Activated CD4-positive, alpha-beta T cell treated with anti-CD3 and anti-CD28 coated beads, Interleukin-2, amount 10 ng/mL, durations not matched to agents 7 days and 5 days (primary cell): ENCODE measurements at regions of chr12 and their contacts with region 1.

Region 1: GRCh38 chr12:57621497-57622292 is 10.5 kb downstream of the ARHGEF25 start:
- DNase-seq: peak; percentile 58
- H3K4me3 Mint-ChIP-seq: peak overlapping the region; percentile 62
- H3K27ac Mint-ChIP-seq: no peak overlapping the region
- H3K4me1 Mint-ChIP-seq: peaks cover 30% of the 10 kb centered on the region
- H3K27me3 Mint-ChIP-seq: peaks cover 96% of the 10 kb centered on the region

Region 2: GRCh38 chr12:57549909-57550640 is 71.6 kb before region 1 on chr12 and contains the start of gene KIF5A:
- CTCF ChIA-PET with region 1: no interaction called
- POLR2A ChIA-PET with region 1: no interaction called
- DNase-seq: peak; percentile 60
- H3K4me3 Mint-ChIP-seq: peak within 1 kb of the TSS; percentile 57
- H3K27ac Mint-ChIP-seq: peak within 1 kb of the TSS; percentile 20
- H3K4me1 Mint-ChIP-seq: peaks cover 37% of the 10 kb centered on the region
- H3K27me3 Mint-ChIP-seq: peaks cover 14% of the 10 kb centered on the region
- total RNA-seq, gene KIF5A: 0.64 to 0.89 TPM

Region 3: GRCh38 chr12:57604992-57605810 is 16.5 kb before region 1 on chr12:
- CTCF ChIA-PET with region 1: interaction called, 11 read pairs
- POLR2A ChIA-PET with region 1: no interaction called
- DNase-seq: no peak
- H3K4me3 Mint-ChIP-seq: peak overlapping the region; percentile 76
- H3K27ac Mint-ChIP-seq: peak overlapping the region; percentile 86
- H3K4me1 Mint-ChIP-seq: peaks cover 23% of the 10 kb centered on the region
- H3K27me3 Mint-ChIP-seq: peaks cover under 1% of the 10 kb centered on the region

Region 4: DNA sequence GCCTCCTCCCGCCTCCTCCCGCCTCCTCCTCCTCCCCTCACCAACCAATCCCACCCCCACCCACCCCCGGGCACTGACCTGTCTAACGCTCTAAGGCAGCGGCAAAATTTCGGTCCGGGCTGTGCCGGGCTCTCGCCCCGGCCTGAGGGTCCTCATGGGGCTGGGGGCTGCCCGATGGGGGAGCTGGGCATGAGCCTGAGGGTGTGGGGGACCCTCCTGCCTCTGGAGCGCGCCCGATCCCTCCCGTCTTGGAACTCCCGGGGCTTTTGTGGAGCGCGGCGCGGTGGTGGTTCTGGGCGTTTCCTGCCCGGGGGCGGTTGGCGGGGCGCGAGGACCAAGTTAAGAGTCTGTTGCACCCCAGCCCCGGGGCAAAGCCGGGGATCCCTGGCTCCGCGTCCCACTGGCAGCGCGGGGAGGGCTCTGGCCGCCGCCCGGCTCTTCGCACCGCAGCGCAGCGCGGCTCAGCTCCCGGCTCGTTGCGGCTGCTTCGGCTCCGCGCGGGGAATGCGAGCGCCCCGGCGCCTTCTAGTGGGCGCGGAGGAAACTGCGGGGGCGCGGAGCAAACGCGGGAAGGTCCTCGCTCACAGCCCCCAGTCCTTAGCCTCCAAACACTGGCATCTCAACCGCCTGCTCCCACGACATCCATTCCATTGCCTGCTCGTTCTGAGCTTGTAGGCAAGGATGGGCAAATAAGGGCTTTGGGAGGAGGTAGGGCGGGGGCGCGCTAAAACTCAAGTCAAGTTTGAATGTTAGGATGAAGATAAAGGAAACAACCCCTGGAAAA is 11.2 kb after region 1 on chr12 and contains the start of gene B4GALNT1:
- CTCF ChIA-PET with region 1: interaction called, 16 read pairs
- POLR2A ChIA-PET with region 1: no interaction called
- DNase-seq: peak; percentile 64
- H3K4me3 Mint-ChIP-seq: peak within 1 kb of the TSS; percentile 68
- H3K27ac Mint-ChIP-seq: no peak within 1 kb of the TSS
- H3K4me1 Mint-ChIP-seq: peaks cover 12% of the 10 kb centered on the region
- H3K27me3 Mint-ChIP-seq: peaks cover 57% of the 10 kb centered on the region
- total RNA-seq, gene B4GALNT1: 0.62 to 0.77 TPM